ENCODE measurements at regions of chr11 and their contacts with region 1.

Region 1: DNA sequence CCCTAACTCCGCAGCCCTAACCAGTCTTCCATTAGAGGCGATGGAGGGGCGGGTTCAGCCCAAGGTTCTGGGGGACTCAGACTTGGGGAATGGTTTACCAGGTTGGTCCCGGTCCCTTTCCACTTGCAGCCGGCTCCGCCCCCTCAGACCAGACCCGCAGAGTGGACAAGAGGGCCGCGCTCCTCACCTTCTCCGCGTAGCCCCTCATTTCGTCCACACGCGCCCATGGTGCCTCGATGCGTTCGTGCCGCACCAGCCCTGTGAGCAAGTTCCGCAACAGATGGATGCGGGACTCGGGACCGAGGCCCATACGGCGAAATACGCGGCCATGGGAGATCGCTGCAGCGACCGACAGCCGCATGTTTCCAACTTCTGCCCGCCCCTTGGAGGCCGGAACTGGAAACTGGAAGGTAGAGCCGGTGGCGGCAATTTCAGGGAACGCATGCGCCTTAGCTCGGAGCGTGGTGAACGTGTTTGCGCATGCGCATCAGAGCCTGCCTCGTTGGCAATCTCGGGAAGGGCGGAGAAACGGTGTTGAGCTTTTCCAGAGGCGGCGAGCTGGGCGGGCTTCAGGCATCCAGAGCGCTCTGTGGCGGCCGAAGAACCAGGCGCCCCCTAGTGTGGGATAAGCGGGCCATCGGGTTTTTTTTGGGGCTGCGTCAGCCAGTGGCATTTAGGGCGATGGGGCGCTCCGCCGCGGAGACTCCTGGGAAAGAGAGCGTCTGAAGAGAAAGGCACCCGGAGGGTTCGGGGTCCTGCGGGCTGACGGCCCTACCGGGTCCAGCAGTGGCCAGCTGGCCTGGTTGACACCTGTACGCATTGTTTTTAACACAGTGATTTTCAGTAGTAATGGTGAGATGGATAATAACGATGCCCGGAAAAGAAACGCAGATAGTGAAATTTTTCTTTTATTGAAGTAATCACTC is at the start of gene MRPL17:
- H3K4me3 Mint-ChIP-seq: peak within 1 kb of the TSS; percentile 98
- H3K27ac Mint-ChIP-seq: peak within 1 kb of the TSS; percentile 96
- H3K4me1 Mint-ChIP-seq: peaks cover 23% of the 10 kb centered on the region
- H3K27me3 Mint-ChIP-seq: peaks cover 5% of the 10 kb centered on the region

Region 2: GRCh38 chr11:6389921-6390724 is 293.1 kb before region 1 on chr11 and contains the start of gene SMPD1:
- intact Hi-C with region 1: loop called (anchors 10 kb)
- H3K4me3 Mint-ChIP-seq: peak within 1 kb of the TSS; percentile 87
- H3K27ac Mint-ChIP-seq: peak within 1 kb of the TSS; percentile 94
- H3K4me1 Mint-ChIP-seq: peaks cover 34% of the 10 kb centered on the region
- H3K27me3 Mint-ChIP-seq: peaks cover 7% of the 10 kb centered on the region

Region 3: GRCh38 chr11:6481012-6481923 is 201.9 kb before region 1 on chr11 and contains the starts of genes ARFIP2 and TIMM10B:
- intact Hi-C with region 1: loop called (anchors 1 kb)
- H3K4me3 Mint-ChIP-seq: peak within 1 kb of the TSS; percentile 95
- H3K27ac Mint-ChIP-seq: peak within 1 kb of the TSS; percentile 96
- H3K4me1 Mint-ChIP-seq: peaks cover 42% of the 10 kb centered on the region
- H3K27me3 Mint-ChIP-seq: no peaks in the 10 kb centered on the region

Region 4: DNA sequence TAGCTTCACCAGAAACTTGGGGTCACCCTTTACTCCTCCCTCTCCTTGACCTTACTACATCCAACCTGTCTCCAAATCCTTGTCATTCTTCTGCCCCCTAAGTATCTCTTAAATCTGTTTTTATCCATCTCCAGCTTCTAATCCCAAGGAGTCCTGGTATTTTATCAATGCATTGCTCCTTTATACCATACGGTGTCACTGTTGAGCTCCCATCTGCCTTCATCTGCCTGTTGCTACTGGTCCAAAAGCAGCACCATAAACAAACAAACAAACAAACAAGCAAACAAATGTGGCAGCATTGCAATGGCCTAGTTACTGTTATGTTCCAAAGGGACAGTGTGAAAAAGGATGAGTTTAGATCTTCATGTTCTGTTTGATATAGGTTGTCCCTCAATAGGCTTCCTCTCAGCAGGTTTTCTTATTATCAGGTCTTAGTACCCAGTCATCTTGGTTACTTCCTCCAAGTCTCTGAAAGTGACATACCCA is 151.9 kb before region 1 on chr11:
- intact Hi-C with region 1: loop called (anchors 1 kb)
- H3K4me3 Mint-ChIP-seq: no peak overlapping the region
- H3K27ac Mint-ChIP-seq: no peak overlapping the region
- H3K4me1 Mint-ChIP-seq: no peaks in the 10 kb centered on the region
- H3K27me3 Mint-ChIP-seq: no peaks in the 10 kb centered on the region

Region 5: DNA sequence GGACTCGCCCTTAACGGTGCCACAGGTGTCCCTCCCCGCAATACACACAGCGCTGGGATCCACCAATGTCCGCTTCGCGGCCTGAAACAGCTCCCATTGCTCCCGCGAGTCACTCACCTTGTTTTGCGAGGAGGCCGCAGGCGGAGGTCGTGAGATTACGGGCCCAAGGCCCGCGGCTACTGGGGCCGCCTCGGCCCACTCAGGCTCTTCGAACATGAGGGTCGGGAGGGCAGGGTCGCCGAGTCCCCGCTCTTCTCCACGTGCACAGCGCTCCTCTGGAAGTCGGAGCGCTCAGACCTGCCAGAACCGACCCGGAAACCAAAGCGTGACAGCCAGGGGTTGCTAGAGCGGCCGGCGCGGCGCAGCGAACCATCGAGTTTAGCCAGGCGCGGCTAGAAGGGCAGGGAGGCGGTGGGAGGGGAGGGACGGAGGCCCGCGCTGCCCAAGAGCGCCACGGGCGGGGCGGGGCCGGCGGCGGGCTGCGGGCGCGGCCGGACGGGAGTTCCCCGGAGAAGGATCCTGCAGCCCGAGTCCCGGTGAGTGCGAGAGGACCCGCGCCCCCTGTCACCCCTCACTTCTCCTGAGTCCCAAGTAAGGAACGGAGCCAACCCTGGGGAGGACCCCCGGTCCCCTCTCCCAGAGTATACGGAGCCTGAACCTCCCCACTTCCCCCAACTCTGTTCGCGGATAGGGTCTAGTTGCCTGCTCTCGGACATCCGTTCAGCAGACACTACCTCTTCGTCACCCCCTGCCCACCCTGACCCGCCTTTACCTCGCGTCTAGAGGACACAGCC is 79.7 kb before region 1 on chr11 and contains the starts of genes ILK and RRP8:
- intact Hi-C with region 1: loop called (anchors 2 kb)
- H3K4me3 Mint-ChIP-seq: no peak within 1 kb of the TSS
- H3K27ac Mint-ChIP-seq: no peak within 1 kb of the TSS
- H3K4me1 Mint-ChIP-seq: peaks cover 16% of the 10 kb centered on the region
- H3K27me3 Mint-ChIP-seq: no peaks in the 10 kb centered on the region

Region 6: GRCh38 chr11:6619004-6619745 is 64.0 kb before region 1 on chr11 and contains the start of gene TPP1:
- intact Hi-C with region 1: loop called (anchors 1 kb)
- H3K4me3 Mint-ChIP-seq: no peak within 1 kb of the TSS
- H3K27ac Mint-ChIP-seq: no peak within 1 kb of the TSS
- H3K4me1 Mint-ChIP-seq: peaks cover 6% of the 10 kb centered on the region
- H3K27me3 Mint-ChIP-seq: peaks cover 2% of the 10 kb centered on the region

Region 7: DNA sequence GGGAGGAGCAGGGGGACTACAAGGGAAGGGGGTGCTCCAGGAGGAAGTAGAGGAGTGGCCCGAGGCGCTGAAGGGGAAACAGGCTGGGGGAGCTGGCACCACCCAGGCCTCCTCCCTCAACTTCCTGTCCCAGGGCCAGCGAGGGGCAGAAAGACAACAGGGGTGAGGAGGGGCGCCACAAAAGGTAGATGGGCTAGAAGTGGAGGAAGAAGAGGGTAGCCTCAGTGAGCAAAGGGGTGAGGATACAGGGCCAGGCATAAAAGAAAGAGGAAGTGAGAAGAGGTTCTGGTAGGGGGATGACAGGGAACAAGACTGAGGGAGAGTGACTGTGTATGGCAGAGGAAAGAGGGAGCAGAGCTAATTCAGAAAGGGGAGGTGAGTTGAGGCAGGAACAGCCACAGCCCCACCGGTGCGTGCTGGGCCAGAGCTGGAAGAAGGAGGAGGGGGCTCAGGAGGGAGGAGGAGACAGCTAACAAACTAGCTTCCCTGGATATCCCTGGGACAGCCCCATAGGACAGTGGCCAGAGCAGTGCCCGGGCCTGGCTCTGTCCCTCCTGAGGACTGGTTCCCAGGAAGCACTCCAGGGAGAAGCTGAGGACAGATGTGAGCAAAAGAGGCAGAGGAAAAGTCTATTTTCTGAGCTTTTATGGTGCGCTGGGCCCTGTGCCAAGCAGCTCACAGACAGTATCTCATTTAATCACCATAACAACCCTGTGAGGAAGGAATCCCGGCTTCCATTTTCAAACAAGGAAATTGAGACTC is 36.1 kb before region 1 on chr11:
- intact Hi-C with region 1: no loop called
- H3K4me3 Mint-ChIP-seq: no peak overlapping the region
- H3K27ac Mint-ChIP-seq: no peak overlapping the region
- H3K4me1 Mint-ChIP-seq: no peaks in the 10 kb centered on the region
- H3K27me3 Mint-ChIP-seq: no peaks in the 10 kb centered on the region

Measured in dendritic cell treated with granulocyte-macrophage colony-stimulating factor and Interleukin-4, amounts not matched to agents 40 ng/mL and 50 ng/mL, for 4 days (primary cell).